Calu3 (cell line): ENCODE measurements at regions of chr7 and their contacts with region 1.

Region 1: GRCh38 chr7:139620676-139621344 is 97.3 kb downstream of the CLEC2L start:
- DNase-seq: peak; percentile 86
- H3K4me3 Mint-ChIP-seq: no peak overlapping the region
- H3K27ac Mint-ChIP-seq: no peak overlapping the region
- H3K4me1 Mint-ChIP-seq: no peaks in the 10 kb centered on the region
- H3K27me3 Mint-ChIP-seq: no peaks in the 10 kb centered on the region
- CTCF ChIP-seq: peak; percentile 85

Region 2: DNA sequence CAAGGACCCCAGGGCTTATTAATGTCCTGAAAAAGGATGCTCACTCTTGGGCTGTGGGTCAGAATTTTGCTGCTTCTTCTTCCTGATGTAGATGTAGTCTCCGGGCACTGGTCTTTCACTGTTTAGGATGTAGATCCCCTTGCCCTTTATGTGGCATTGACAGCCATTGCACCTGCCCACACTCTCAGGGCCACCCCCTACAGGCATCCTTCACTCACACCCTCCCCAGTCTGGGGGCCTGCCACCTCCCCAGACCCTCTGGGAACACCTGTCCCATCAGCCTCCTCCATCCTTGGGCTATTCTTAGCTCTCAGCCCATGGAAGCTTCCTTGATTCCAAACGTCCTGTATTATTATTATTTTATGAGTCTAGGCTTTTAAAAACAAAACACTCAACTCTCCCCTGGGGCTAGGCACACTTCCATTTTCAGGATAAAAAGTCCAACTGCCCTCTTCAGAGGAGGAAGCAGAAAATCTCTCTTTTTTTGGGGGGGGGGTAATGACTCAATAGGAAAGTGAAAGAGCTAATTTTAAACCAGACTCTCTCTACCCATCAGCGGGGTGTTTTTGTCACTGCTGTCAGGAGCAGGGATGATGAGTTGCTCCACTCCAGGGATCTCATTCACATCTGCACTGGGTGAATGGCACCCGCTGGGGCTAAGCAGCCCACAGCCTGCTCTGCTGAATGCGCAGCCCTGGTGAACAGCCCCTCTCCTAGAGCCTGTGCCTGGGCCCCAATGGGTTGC is 125.8 kb before region 1 on chr7:
- CTCF ChIA-PET with region 1: interaction called, 17 read pairs
- intact Hi-C with region 1: loop called (anchors 2 kb)
- DNase-seq: no peak
- H3K4me3 Mint-ChIP-seq: no peak overlapping the region
- H3K27ac Mint-ChIP-seq: no peak overlapping the region
- H3K4me1 Mint-ChIP-seq: no peaks in the 10 kb centered on the region
- H3K27me3 Mint-ChIP-seq: peaks cover 57% of the 10 kb centered on the region
- CTCF ChIP-seq: no peak

Region 3: DNA sequence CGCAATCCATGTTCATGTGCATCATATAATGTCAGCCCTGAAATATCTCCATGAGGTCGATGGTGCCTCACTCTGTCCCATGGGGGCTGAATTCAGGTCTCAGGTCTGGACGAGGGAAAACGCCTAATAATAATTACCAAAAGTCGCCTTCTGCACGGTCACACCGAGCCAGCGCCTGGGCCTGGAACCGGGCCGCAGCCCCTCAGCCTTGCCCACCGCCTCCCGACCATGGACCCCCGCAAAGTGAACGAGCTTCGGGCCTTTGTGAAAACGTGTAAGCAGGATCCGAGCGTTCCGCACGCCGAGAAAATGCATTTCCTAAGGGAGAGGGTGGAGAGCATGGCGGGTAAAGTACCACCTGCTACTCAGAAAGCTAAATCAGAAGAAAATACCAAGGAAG is 118.6 kb before region 1 on chr7:
- CTCF ChIA-PET with region 1: interaction called, 17 read pairs
- intact Hi-C with region 1: loop called (anchors 2 kb)
- DNase-seq: no peak
- H3K4me3 Mint-ChIP-seq: no peak overlapping the region
- H3K27ac Mint-ChIP-seq: no peak overlapping the region
- H3K4me1 Mint-ChIP-seq: no peaks in the 10 kb centered on the region
- H3K27me3 Mint-ChIP-seq: peaks cover 26% of the 10 kb centered on the region
- CTCF ChIP-seq: no peak

Region 4: DNA sequence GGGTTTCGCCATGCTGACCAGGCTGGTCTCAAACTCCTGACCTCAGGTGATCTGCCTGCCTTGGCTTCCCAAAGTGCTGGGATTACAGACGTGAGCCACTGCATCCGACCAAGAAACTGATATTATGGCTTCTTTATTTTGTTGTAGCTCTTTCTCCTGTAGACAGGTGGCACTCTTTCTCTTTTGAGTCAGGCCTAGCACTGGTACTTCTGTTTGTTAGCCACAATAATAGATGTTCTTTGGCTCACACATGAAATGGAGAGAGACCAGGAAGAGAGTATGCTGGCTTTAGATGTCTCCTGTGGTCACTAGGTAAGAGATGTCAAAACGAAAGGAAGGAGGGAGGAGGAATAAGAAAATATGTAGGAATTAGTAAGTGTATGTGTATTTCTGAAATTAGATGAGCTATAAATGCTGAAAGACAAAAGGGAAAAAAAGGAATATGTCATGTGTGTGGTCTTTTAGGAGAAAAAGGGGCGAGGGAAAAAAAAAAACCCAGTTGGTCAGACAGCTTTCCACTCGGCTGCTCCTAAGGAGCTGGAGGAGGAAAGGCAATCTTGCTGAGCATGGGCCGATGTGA is 18.6 kb before region 1 on chr7:
- CTCF ChIA-PET with region 1: interaction called, 13 read pairs
- intact Hi-C with region 1: no loop called
- DNase-seq: no peak
- H3K4me3 Mint-ChIP-seq: no peak overlapping the region
- H3K27ac Mint-ChIP-seq: no peak overlapping the region
- H3K4me1 Mint-ChIP-seq: peaks cover 23% of the 10 kb centered on the region
- H3K27me3 Mint-ChIP-seq: no peaks in the 10 kb centered on the region
- CTCF ChIP-seq: peak; percentile 17

Region 5: DNA sequence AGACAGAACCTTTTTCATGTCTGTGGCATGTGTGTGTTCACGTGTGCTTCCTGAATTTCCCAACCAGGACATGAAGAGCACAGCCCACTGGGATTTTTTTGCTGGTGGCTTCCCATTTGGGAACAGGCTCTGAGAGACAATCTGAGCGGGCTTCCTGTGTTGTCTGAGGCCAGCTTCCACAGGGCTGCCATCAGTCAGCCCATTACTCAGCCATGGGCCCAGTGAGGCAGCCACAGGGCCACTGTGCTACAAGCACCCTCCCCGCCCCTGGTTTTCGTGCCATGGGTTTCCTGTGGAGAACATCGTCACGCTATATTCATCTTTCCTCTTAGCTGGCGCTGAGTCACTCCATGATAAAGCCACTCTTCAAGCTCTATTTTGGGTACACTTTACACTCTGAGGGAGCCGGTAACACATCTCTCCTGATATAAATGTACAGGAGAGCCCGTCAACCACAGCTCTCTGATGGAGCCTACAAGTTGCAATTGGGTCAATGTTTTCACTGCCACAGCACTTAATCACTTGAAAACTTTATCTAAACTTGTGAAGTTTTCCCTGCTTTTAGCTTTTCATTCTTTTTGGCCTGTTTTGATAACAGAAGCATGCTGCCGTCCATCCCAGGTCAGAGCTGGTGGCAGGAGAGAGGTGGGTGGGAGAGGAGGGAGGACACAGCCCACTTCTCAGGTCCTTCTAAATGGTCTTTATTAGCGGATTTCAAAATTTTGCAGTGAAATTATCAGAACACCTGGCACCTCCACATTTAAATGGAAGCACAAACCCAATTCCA is 60.1 kb after region 1 on chr7:
- CTCF ChIA-PET with region 1: no interaction called
- intact Hi-C with region 1: no loop called
- DNase-seq: peak; percentile 63
- H3K4me3 Mint-ChIP-seq: peak overlapping the region; percentile 59
- H3K27ac Mint-ChIP-seq: peak overlapping the region; percentile 94
- H3K4me1 Mint-ChIP-seq: peaks cover 44% of the 10 kb centered on the region
- H3K27me3 Mint-ChIP-seq: no peaks in the 10 kb centered on the region
- CTCF ChIP-seq: no peak